ENCODE measurements at regions of chr20 and their contacts with region 1.

Region 1: GRCh38 chr20:57391074-57391554 is at the start of gene RBM38:
- DNase-seq: no peak
- H3K4me3 ChIP-seq: peak within 1 kb of the TSS; percentile 79 to 83
- H3K27ac ChIP-seq: peak within 1 kb of the TSS; percentile 82 to 91
- H3K4me1 ChIP-seq: peaks cover 4 to 45% of the 10 kb centered on the region in 2 donors
- H3K27me3 ChIP-seq: no peaks in the 10 kb centered on the region
- CTCF ChIP-seq: no peak
- total RNA-seq, gene RBM38: 24.6 TPM

Region 2: GRCh38 chr20:57351042-57351783 is 39.9 kb before region 1 on chr20 and contains the start of gene RAE1:
- intact Hi-C with region 1: no loop called
- DNase-seq: peak; percentile 35 to 94
- H3K4me3 ChIP-seq: peak within 1 kb of the TSS; percentile 90 to 99
- H3K27ac ChIP-seq: peak within 1 kb of the TSS; percentile 86 to 95
- H3K4me1 ChIP-seq: peaks cover 4 to 9% of the 10 kb centered on the region in 2 donors
- H3K27me3 ChIP-seq: no peaks in the 10 kb centered on the region
- CTCF ChIP-seq: no peak
- total RNA-seq, gene RAE1: 9.5 TPM

Region 3: GRCh38 chr20:57374931-57375651 is 16.0 kb before region 1 on chr20:
- intact Hi-C with region 1: no loop called
- DNase-seq: peak in 1 of 2 donors; percentile 34
- H3K4me3 ChIP-seq: no peak overlapping the region
- H3K27ac ChIP-seq: no peak overlapping the region
- H3K4me1 ChIP-seq: no peaks in the 10 kb centered on the region
- H3K27me3 ChIP-seq: no peaks in the 10 kb centered on the region
- CTCF ChIP-seq: no peak

Region 4: DNA sequence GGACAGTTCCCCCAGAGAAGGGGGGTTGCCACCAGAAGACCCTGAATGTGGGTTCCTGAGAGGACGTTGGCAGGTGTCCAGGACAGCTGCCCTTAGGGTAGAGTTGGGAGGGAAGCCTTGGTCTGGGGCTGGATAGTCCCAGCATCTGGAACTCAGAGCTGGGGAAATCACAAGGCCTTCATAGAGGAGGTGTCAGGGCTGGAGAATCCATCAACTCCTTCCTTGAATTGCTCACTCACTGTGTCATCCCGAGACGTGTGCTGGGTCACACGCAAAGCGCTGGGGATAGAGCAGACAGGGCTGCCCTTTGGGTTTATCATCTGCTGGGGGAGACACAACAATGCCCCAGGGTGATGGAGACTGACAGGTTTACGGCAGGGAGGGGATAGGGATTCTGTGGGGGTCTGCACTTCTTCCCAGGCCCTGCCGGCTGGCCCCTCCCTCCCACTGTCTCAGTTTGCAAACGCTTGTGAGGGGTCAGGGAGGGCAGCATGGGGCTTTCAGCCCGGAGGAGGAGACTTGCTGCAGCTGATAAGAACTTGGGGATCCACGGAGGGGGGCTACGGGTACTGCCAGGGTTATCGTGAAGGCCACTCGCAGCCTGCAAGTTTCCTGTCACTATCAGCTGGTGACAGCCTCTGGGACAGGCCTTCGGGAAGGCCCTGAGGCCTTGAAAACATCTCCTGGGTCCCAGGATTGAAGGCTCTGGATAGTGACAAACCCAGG is 18.7 kb after region 1 on chr20:
- intact Hi-C with region 1: loop called (anchors 2 kb)
- DNase-seq: no peak
- H3K4me3 ChIP-seq: peak overlapping the region in 1 of 2 donors; percentile 33
- H3K27ac ChIP-seq: no peak overlapping the region
- H3K4me1 ChIP-seq: peaks cover 16 to 24% of the 10 kb centered on the region in 2 donors
- H3K27me3 ChIP-seq: no peaks in the 10 kb centered on the region
- CTCF ChIP-seq: no peak

Region 5: DNA sequence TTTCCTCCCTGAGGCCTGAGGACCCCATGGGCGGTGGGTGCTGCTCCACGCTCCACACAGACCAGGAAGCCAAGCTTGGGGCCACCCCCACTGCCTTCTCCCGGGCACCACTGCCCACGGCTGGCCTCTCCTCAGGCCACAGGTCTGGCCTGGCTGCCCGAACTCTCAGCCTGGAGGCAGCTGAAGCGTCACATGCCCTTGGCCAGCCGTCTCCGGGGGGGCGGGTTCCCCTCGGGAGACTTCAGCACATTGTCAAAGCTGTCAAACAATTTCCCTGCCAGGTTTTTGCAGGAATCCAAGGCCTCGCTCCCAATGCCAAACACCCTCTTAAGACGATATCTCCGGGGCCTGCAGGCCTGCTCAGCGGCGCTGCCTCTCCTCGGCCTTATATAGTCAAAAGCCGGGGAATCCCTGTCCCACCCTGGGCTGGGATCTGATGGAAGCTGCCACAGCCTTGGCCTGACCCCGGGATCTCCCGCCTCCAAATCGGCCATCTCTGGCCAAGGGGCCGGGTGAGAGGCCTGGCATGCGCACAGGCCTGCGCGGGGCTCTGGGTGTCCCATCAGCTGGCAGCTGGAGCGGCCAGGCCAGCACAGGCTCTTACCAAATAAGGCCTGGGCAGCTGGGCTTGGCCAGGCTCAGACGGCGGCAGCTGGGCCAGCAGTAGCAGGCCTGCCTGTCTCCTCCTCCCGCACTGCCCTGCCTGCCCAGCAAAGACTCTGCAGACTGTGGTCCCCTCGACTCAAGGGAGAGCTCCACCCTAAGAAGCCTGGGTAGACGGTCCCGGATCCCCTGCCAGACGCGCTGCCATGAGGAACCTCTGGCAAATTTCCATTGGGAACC is 49.8 kb after region 1 on chr20:
- intact Hi-C with region 1: loop called (anchors 2 kb)
- DNase-seq: peak; percentile 72 to 95
- H3K4me3 ChIP-seq: no peak overlapping the region
- H3K27ac ChIP-seq: peak overlapping the region; percentile 93 to 94
- H3K4me1 ChIP-seq: peaks cover 33 to 78% of the 10 kb centered on the region in 2 donors
- H3K27me3 ChIP-seq: no peaks in the 10 kb centered on the region
- CTCF ChIP-seq: no peak

Region 6: DNA sequence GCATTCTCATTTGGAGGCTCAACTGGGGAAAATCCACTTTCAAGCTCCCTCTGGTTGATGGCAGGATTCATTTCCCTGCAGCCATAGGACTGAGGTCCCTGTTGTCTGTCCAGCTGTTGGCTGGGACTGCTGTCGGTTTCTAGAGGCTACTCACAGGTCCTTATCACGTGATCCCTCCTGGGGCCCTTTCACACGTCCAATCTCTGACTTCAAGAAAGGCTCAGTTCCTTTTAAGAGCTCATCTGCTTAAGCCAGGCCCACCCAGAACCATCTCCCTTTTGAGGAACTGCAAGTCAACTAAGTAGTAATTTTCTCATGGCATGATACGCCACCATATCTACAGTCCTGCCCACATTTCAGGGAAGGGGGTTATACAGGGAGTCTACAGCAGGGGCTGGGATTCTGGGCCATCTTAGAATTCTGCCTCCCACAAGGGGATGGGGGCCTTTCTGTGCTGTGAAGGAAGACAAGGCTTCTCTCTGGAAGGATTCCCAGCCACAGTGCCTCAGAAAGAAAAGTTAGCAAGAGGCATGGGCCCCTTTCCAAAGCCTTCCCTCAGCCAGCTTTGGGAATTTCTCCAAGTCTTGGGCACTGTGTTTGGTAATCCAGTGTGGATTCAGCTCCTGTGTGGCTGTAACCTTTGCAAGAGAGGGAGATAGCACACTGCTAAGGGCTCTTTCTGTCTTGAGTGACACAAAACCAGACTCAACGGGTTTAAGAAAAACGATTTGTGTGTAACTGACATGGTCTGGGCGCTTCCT is 67.5 kb after region 1 on chr20:
- intact Hi-C with region 1: loop called (anchors 2 kb)
- DNase-seq: peak in 1 of 2 donors; percentile 85
- H3K4me3 ChIP-seq: no peak overlapping the region
- H3K27ac ChIP-seq: peak overlapping the region; percentile 39 to 57
- H3K4me1 ChIP-seq: peaks cover 7 to 17% of the 10 kb centered on the region in 2 donors
- H3K27me3 ChIP-seq: no peaks in the 10 kb centered on the region
- CTCF ChIP-seq: no peak

Region 7: GRCh38 chr20:57582432-57583305 is 191.6 kb after region 1 on chr20:
- intact Hi-C with region 1: loop called (anchors 5 kb)
- DNase-seq: peak; percentile 31 to 87
- H3K4me3 ChIP-seq: peak overlapping the region; percentile 45 to 47
- H3K27ac ChIP-seq: peak overlapping the region; percentile 82 to 83
- H3K4me1 ChIP-seq: peaks cover 0 to 23% of the 10 kb centered on the region in 2 donors
- H3K27me3 ChIP-seq: no peaks in the 10 kb centered on the region
- CTCF ChIP-seq: peak; percentile 6 to 47 (median 43)

Region 8: DNA sequence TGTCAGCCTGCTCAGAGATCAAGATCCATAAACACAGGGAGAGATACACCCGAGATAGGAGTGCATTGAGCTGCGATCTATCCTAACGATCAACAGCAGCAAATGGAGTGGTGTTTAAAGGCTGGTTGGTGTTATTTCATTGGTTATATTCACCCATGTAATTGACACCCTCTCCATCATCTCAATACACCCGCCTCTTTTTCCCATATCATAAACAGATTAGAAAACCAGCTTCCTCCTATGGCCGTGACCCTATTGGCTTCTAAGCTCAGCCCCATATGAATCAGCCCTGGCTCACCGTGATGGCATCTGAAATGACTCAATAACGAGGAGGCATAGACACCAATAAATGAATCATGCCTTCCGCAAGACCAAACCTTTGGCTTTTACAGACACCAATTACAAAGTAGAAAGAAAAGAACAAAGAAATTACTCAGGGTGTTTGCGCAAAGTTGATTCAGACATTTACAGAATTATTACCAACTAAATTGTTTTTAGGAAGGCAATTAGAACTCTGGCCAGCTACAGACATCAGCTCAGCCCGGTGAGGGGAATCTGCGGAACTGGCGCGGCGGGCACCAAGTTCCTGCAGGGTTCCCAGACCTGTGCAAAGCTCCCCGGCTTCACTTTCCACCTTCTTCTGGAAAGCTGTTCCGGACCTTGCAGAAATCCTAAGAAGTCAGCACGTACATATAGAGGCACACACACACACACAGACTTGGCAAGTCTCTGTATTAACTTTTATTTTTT is 307.2 kb after region 1 on chr20:
- intact Hi-C with region 1: loop called (anchors 10 kb)
- DNase-seq: peak in 1 of 2 donors; percentile 83
- H3K4me3 ChIP-seq: peak overlapping the region in 1 of 2 donors; percentile 31
- H3K27ac ChIP-seq: peak overlapping the region; percentile 19 to 61
- H3K4me1 ChIP-seq: peaks cover 25 to 86% of the 10 kb centered on the region in 2 donors
- H3K27me3 ChIP-seq: no peaks in the 10 kb centered on the region
- CTCF ChIP-seq: no peak

Region 9: DNA sequence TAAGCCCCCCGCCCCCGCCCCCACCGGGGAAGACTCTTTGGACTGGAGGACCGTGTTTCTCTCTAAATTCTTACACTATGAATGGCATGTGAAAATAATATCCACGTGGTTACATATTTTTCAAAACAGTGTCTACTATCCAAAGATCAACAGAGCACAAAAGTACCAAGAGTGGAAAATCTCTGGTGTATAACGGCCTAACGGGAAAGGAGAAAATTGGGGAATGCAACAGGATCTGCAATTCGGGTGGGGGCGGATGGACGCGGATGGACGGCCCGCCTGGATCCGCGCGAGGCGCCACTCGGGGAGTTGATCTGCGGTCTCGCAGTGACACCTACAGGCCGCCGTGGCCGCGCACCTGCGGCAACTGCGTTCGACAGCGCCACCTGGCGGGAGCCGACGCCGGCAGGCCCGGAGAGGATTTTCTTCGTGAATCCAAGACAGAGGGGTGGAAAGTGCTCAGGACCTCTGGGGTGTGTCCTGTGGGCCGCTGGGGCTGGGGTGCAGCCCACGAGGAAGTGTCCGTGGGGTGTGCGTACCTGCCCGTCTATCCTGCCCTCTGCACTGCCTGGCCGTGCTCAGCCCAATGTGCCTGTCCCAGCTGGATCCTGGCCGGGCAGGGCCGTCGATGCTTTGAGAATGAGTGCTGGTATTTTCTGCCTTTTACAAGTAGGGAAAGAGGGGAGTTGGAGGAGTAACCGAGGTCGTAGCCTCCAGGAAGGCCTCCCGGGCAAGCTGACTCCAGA is 818.7 kb after region 1 on chr20:
- intact Hi-C with region 1: loop called (anchors 10 kb)
- DNase-seq: peak in 1 of 2 donors; percentile 88
- H3K4me3 ChIP-seq: no peak overlapping the region
- H3K27ac ChIP-seq: no peak overlapping the region
- H3K4me1 ChIP-seq: no peaks in the 10 kb centered on the region
- H3K27me3 ChIP-seq: no peaks in the 10 kb centered on the region
- CTCF ChIP-seq: peak; percentile 100

Measured in ascending aorta (tissue), 2 donors.